Left cardiac atrium (tissue), 4 donors: ENCODE measurements at regions of chr6 and their contacts with region 1.

Region 1: DNA sequence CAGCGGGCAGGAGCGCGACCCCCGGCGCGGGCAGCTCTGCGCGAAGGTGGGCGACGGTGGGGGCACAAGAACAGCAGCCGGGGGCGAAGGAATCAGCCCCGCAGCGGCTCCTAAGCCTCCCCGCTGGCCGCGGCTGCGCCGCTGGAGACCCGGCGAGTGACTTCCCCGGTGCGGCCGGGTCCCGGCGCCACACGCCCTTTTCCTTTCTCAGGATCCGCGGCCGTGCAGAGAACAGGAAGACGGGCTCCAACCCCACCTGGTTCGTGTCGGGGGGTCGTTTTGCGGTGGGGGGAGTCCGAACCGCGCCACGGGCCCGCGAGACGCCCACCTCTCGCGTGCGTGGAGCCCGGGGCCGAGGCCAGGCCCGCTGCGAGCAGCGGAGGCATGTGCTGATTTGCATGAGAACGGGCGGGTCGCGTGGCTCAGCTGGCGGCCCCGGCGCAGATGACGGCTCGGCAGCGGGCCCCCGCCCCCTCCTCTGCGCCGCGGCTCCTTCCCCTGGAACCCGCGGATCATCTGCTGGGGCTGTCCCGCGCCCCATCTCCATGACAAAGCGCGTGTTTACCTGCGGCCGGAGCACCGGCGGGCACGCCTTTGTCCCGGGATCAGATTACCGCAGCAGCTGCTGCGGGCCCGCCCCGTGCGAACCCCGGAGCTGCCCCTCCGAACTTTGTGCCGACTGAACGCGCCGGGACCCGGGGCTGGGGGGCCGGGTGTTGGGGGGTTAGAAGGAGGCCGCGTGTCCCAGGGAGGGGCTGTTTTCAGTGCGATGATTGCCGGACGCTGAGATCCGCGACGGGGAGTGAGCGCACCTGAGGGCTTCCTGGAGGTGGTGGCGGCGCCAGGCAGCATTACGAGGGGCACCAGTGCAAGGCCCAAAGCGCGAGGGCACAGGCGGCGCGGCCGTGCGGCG is 4.9 kb upstream of the DLL1 start:
- DNase-seq: no peak
- ATAC-seq: peak; percentile 24 to 39

Region 2: DNA sequence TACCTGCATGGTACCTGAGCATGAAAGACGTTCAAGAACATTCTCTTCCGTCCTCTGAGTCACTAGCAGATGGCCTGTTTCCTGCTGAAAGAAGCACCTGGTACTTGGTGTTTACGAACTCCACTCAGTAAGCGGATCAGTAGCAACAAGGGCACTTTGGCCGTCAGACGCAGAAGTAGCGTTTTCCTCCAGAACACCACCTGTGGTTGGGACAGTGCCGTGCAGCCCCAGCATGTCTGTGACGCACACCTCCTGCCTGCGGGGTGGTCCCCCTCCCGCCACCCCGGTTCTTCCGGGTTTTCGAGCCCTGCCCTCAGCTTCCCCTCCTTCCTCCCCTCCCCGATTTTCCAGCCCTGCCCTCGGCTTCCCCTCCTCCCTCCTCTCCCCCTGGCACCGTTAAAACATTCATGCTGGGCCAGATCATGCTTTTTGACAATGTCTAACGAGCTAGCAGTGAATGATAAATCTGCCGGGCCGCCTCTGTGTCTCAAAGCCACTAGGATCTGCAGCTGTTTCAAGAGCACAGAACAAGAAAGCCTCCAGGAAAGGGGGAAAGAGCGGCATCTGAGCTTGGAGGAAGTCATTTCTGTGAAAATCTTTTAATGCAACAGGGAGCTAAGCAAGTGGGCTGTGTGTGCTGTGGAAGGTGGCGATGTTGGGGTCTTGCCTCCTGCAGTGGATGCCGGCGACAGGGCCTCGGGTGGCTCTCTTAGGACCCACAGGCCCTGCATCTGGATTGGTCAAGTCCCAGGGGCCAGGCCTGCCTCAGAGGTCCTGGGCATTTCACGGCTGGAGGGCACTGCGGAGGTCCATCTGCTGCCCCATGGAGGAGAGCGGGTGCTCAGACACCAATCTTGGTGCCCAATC is 336.4 kb before region 1 on chr6:
- intact Hi-C with region 1: loop called in 1 of 2 experiments (anchors 10 kb)
- DNase-seq: no peak
- ATAC-seq: peak in 1 of 2 donors; percentile 6

Region 3: GRCh38 chr6:169978615-169979513 is 316.9 kb before region 1 on chr6:
- intact Hi-C with region 1: no loop called
- DNase-seq: no peak
- ATAC-seq: peak in 1 of 2 donors; percentile 47

Region 4: DNA sequence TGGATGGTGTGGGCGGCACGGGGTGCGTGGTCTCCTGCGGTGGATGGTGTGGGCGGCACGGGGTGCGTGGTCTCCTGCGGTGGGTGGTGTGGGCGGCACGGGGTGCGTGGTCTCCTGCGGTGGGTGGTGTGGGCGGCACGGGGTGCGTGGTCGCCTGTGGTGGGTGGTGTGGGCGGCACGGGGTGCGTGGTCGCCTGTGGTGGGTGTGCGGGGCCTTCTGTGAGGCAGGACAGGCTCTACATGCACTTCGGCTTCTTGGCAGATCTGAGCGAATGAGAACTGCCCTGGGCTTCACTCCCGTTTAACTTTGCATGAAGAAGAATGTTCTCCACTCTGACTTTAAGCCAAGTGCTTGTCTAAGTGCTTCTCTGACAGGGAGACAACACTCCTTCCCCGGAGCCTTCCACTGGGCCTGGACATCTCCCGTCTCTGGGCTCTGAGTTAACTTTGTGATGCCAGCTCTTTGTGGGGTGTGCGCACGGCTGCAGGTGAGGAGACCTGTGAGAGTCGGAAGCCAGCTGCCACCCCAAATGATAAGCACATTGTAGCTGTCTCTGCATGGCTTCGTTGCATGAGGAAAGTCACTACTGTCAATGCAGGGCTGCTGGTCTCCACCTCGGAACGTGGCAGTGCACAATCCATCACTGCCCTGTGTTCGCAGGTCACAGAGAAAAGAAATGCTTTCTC is 249.6 kb before region 1 on chr6:
- intact Hi-C with region 1: loop called in 1 of 2 experiments (anchors 2 kb)
- DNase-seq: peak; percentile 14
- ATAC-seq: peak in 1 of 2 donors; percentile 11

Region 5: DNA sequence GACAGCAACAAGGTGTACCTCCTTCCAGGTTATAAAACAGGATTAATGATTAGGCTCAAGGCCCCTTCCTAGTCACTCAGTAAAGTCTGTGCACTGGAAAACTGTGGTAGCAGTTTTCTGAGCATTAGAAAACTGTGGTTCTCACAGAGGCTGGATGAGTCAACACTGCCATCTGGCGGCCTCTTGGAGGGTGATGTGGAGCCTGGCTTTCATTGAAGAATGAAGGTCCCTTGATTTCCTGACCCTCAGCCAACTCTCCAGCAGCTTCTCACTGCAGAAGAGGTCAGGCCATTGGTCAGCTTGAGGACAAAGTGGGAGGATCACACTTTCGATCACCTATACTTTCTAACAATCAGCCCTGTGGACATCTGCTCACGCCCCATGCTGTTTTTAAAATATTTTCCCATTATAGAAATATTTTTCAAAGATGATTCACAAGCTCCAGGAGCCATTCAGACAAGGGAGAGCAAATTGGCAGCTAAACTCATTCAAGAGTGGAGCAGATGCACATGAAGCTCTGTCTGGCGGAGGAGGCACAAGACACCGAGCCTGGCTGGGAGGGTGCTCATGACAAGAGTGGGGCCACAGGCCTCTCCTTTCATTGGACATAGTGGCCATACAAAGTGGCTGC is 234.2 kb after region 1 on chr6:
- intact Hi-C with region 1: loop called (anchors 5 to 10 kb)
- DNase-seq: peak; percentile 82
- ATAC-seq: peak; percentile 87 to 89